ENCODE measurements at regions of chr20 and their contacts with region 1.

Region 1: GRCh38 chr20:33097001-33097400 is 17.6 kb downstream of the BPIFB4 start:
- DNase-seq: no peak
- ATAC-seq: no peak
- H3K4me3 ChIP-seq: no peak overlapping the region
- H3K27ac ChIP-seq: no peak overlapping the region
- H3K4me1 ChIP-seq: no peaks in the 10 kb centered on the region
- H3K27me3 ChIP-seq: peaks cover 0 to 9% (median 0%) of the 10 kb centered on the region in 7 donors
- CTCF ChIP-seq: no peak

Region 2: GRCh38 chr20:32674362-32674789 is 422.6 kb before region 1 on chr20:
- intact Hi-C with region 1: loop called in 1 of 10 experiments (anchors 10 kb)
- DNase-seq: no peak
- ATAC-seq: peak in 3 of 8 donors; percentile 34 to 48 (median 44)
- H3K4me3 ChIP-seq: no peak overlapping the region
- H3K27ac ChIP-seq: no peak overlapping the region
- H3K4me1 ChIP-seq: peaks cover 0 to 31% (median 0%) of the 10 kb centered on the region in 9 donors
- H3K27me3 ChIP-seq: no peaks in the 10 kb centered on the region
- CTCF ChIP-seq: peak; percentile 44 to 74 (median 66)

Region 3: DNA sequence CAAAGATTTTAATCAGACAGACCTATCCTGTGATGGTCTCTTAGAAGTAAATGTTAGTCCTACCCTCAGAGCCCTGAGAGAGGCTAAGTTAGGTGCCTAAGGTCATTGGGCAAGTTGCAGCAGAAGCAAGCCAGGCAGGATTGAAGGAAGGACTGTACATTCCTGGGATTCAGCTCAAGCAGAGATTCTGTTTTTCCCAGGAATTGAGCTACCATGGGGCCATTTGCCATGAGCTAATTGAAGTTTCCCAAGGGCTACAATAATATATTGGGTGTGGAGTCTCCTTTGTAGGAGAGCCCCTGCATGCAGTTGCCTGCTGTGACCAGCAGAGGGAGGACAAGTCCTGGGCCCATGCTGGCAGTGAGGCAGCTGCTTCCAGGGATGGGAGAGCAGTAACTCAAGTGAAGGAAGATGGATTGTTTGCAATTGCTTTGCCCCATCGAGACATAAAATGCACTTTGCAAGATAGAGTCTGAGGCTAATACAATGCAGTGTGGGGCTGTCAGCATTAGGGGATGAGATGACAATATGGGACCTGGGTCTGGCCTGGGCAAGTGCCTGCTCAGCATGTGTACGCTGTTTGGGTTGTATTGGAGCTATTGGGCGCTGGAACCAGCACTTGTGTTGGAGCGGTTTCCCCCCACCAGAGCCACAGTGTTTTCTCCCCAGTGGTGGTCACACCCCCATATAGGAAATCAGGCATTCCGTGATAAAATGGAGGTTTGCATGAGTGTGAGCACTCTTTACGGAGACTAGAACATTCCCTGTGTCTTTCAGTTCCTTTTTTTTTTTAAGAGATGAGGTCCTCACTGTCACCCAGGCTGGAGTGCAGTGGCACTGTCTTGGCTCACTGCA is 306.9 kb before region 1 on chr20:
- intact Hi-C with region 1: loop called in 7 of 10 experiments (anchors 5 to 10 kb)
- DNase-seq: peak; percentile 70 to 71
- ATAC-seq: peak; percentile 77 to 92 (median 87)
- H3K4me3 ChIP-seq: no peak overlapping the region
- H3K27ac ChIP-seq: no peak overlapping the region
- H3K4me1 ChIP-seq: peaks cover 0 to 21% (median 10%) of the 10 kb centered on the region in 9 donors
- H3K27me3 ChIP-seq: no peaks in the 10 kb centered on the region
- CTCF ChIP-seq: peak; percentile 96 to 99 (median 98)

Region 4: GRCh38 chr20:32908334-32909292 is 188.4 kb before region 1 on chr20:
- intact Hi-C with region 1: loop called in 9 of 10 experiments (anchors 2 to 5 kb)
- DNase-seq: no peak
- ATAC-seq: no peak
- H3K4me3 ChIP-seq: no peak overlapping the region
- H3K27ac ChIP-seq: no peak overlapping the region
- H3K4me1 ChIP-seq: no peaks in the 10 kb centered on the region
- H3K27me3 ChIP-seq: peaks cover 0 to 6% (median 0%) of the 10 kb centered on the region in 7 donors
- CTCF ChIP-seq: no peak

Region 5: DNA sequence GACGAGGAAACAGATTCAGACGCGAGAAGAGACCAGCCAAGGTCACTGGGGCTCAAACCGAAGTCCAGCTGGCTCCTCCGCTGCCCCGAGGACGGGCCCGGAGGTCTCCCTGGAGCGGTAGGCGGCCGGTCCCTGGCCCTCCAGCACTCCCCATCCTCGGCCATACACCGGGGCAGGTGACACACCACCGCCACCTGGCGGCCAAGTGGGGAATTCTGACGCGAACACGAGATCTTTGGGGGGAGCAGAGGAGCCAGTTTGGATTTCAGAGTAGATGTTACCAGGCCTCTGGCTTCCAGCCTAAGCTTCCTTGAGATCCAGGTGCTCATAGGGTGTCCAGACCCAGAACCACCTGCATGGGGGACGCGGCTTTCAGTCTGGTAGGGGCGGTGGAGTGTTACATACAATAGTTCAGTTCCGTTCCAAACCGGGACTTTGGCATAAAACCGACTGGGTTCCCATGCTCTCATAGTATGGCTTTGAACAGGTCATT is 202.2 kb after region 1 on chr20:
- intact Hi-C with region 1: loop called in 4 of 10 experiments (anchors 1 to 10 kb)
- DNase-seq: peak; percentile 44 to 68
- ATAC-seq: peak in 7 of 8 donors; percentile 42 to 76 (median 66)
- H3K4me3 ChIP-seq: no peak overlapping the region
- H3K27ac ChIP-seq: no peak overlapping the region
- H3K4me1 ChIP-seq: peaks cover 0 to 5% (median 0%) of the 10 kb centered on the region in 9 donors
- H3K27me3 ChIP-seq: peaks cover 0 to 24% (median 8%) of the 10 kb centered on the region in 7 donors
- CTCF ChIP-seq: peak; percentile 75 to 96 (median 87)

Measured in heart right ventricle (tissue), 16 donors.